ENCODE measurements at regions of chr10 and their contacts with region 1.

Region 1: DNA sequence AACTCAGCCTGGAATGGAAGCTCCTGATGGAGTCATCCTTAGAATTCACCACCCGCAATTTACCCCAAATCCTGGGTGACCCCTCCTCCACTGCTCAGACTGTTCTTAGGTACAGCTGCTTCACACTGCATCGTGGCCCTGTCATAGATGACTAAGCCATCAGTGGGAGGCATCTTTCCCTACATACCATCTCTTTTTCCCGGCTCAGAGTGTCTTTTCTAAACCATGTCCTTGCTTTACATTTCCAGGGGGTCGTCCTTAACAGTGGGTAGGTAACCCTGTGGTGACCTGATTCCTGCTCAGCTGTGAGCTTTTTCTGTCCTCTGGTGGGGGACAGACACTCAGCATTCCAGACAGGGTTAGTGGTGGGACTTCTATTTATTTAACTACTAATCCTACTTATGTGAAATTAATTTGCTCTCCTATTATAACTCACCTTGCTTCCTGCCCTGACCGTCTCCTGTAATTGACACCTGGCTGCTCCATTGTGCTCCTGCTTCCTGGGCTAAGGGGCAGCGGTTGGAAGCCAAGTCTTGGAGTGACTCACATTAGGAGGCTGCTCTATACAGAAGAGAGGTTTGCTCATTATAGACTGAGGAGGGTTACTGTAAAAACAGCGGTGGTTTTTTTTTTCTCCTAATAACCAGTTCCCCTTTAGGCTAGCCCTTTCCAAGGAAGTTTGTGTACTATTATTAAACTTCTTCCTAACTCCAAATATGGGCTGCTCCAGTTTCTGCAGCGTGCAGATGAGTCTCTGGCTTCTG is 40.6 kb downstream of the PYROXD2 start:
- DNase-seq: no peak
- H3K4me3 ChIP-seq: no peak overlapping the region
- H3K27me3 ChIP-seq: no peaks in the 10 kb centered on the region; the same call in 1 of the 2 replicates
- CTCF ChIP-seq: no peak

Region 2: GRCh38 chr10:98224509-98224908 is 149.9 kb before region 1 on chr10:
- CTCF ChIA-PET with region 1: no interaction called
- POLR2A ChIA-PET with region 1: no interaction called
- DNase-seq: peak; percentile 46
- H3K4me3 ChIP-seq: no peak overlapping the region
- H3K27me3 ChIP-seq: no peaks in the 10 kb centered on the region
- CTCF ChIP-seq: no peak

Region 3: DNA sequence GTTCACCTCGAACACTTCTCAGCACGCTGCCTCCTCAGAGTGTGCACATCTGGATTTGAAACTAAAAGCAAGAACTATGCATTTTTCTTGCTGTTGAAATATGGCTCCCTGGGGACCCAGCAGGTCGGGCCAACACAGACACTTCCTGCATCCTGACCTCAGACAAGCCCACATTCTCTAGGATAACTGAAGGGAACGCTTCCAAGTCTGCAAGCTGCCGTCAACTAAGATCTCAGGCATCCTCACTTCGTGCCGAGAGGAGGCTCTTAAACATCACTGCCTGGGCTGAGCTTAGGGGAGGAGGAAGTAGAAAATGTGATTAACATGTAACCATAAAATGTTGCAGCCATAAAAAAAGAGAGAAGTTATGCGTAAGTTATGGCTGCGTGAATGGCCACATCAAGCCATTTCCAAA is 24.9 kb before region 1 on chr10:
- CTCF ChIA-PET with region 1: no interaction called
- POLR2A ChIA-PET with region 1: no interaction called
- DNase-seq: peak; percentile 100
- H3K4me3 ChIP-seq: no peak overlapping the region
- H3K27me3 ChIP-seq: no peaks in the 10 kb centered on the region; the same call in 1 of the 2 replicates
- CTCF ChIP-seq: no peak

Region 4: DNA sequence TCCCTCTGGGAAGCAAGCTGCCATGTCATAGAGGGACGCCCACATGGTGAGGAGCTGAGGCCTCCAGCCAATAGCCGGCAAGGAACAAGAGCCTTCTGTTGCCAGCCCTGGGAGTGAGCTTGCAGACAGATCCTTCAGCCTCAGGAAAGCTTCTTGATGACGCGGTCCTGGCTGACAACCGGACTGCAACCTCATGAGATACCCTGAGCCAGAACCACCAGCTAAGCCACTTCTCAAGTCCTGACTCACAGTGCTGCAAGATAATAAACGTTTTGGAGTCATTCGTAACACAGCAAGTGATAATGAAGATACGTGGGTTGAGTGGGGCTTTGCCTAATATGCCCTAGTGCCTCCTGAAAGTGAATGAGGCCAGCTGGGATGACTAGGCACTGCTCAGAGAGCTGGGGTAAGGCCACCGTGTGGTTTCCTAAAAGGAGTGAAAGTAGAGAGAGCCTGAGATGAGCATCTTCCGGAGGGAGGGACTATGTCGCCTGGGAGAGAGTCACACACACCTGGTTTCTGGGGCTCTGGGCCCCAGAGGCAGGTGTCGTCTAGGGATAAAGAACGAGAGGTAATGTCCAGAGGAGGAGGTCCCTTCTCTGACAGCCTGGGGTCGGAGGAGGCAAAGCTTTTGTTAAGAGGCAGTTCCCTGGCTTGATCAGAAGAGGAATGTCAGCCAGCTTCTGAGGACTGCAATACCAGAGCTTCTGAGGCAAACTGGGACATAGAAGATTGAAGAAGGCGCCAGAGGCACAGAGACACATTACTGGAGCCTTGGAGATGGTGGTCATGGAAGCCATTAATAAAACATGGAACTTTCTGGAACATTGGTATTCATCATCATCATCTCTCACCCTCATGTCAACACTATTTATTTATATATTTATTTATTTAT is 13.0 kb before region 1 on chr10:
- CTCF ChIA-PET with region 1: interaction called, 26 read pairs
- POLR2A ChIA-PET with region 1: no interaction called
- DNase-seq: peak; percentile 88
- H3K4me3 ChIP-seq: no peak overlapping the region; the same call in 1 of the 2 replicates
- H3K27me3 ChIP-seq: no peaks in the 10 kb centered on the region
- CTCF ChIP-seq: no peak

Region 5: GRCh38 chr10:98599032-98599610 is 224.7 kb after region 1 on chr10:
- CTCF ChIA-PET with region 1: no interaction called
- POLR2A ChIA-PET with region 1: no interaction called
- DNase-seq: no peak
- H3K4me3 ChIP-seq: no peak overlapping the region
- H3K27me3 ChIP-seq: no peaks in the 10 kb centered on the region
- CTCF ChIP-seq: no peak

Region 6: GRCh38 chr10:98610836-98611235 is 236.4 kb after region 1 on chr10:
- CTCF ChIA-PET with region 1: no interaction called
- POLR2A ChIA-PET with region 1: no interaction called
- DNase-seq: no peak
- H3K4me3 ChIP-seq: no peak overlapping the region
- H3K27me3 ChIP-seq: no peaks in the 10 kb centered on the region
- CTCF ChIP-seq: no peak